ENCODE measurements at regions of chr10 and their contacts with region 1.

Region 1: GRCh38 chr10:88901206-88901983 is 21.4 kb downstream of the STAMBPL1 start:
- DNase-seq: no peak
- H3K4me3 ChIP-seq: no peak overlapping the region
- H3K27ac ChIP-seq: no peak overlapping the region
- H3K4me1 ChIP-seq: no peaks in the 10 kb centered on the region
- H3K27me3 ChIP-seq: no peaks in the 10 kb centered on the region
- CTCF ChIP-seq: no peak
- POLR2A ChIP-seq: no peak

Region 2: GRCh38 chr10:88442716-88443115 is 458.7 kb before region 1 on chr10:
- CTCF ChIA-PET with region 1: no interaction called
- POLR2A ChIA-PET with region 1: no interaction called
- dilution Hi-C with region 1: no loop called
- intact Hi-C with region 1: no loop called
- DNase-seq: no peak
- H3K4me3 ChIP-seq: no peak overlapping the region
- H3K27ac ChIP-seq: no peak overlapping the region
- H3K4me1 ChIP-seq: no peaks in the 10 kb centered on the region
- H3K27me3 ChIP-seq: no peaks in the 10 kb centered on the region
- CTCF ChIP-seq: no peak
- POLR2A ChIP-seq: no peak

Region 3: GRCh38 chr10:88858491-88858890 is 42.9 kb before region 1 on chr10:
- CTCF ChIA-PET with region 1: no interaction called
- POLR2A ChIA-PET with region 1: no interaction called
- dilution Hi-C with region 1: no loop called
- intact Hi-C with region 1: loop called (anchors 5 kb)
- DNase-seq: no peak
- H3K4me3 ChIP-seq: no peak overlapping the region
- H3K27ac ChIP-seq: no peak overlapping the region
- H3K4me1 ChIP-seq: no peaks in the 10 kb centered on the region
- H3K27me3 ChIP-seq: peaks cover 10 to 15% of the 10 kb centered on the region in 2 experiments
- CTCF ChIP-seq: no peak
- POLR2A ChIP-seq: no peak

Region 4: DNA sequence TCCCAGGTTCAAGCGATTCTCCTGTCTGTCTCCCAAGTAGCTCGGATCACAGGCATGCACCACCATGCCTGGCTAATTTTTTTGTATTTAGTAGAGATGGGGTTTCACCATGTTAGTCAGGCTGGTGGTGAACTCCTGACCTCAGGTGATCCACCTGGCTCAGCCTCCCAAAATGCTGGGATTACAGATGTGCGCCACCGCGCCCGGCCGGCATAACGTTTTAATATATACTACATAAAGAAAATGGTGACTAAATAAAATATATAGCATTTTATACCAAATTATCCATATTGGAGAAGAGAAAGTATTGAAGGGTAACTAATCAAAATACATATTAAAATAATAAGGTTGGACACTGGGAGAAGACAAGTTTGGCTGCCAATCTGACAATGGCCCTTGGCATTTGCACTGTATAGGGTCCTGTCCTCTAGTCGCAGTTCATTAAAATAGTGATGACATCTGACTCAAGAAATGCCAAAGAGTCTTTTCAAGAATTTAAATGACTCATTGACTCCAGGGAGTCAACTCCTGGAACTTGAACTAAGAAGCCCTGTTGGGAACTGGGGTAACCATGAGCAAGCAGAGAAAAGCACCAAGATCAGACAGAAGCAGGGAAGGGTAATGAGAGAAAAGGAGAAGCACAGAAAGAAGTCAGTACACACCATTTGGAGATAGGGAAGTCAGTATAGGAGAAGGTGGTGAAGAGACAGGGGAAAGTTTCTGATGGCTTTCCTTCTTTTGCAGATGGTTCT is 214.7 kb after region 1 on chr10:
- CTCF ChIA-PET with region 1: no interaction called
- POLR2A ChIA-PET with region 1: no interaction called
- dilution Hi-C with region 1: no loop called
- intact Hi-C with region 1: no loop called
- DNase-seq: peak; percentile 56
- H3K4me3 ChIP-seq: peak overlapping the region in 1 of 3 experiments; percentile 46
- H3K27ac ChIP-seq: peak overlapping the region; percentile 90
- H3K4me1 ChIP-seq: peaks cover 43% of the 10 kb centered on the region
- H3K27me3 ChIP-seq: no peaks in the 10 kb centered on the region
- CTCF ChIP-seq: no peak
- POLR2A ChIP-seq: no peak